ENCODE measurements at regions of chr22 and their contacts with region 1.

Region 1: GRCh38 chr22:39526736-39527171 is 5.8 kb downstream of the RPS19BP1 start:
- DNase-seq: no peak
- H3K4me3 ChIP-seq: no peak overlapping the region
- H3K27ac ChIP-seq: peak overlapping the region; percentile 25
- H3K4me1 ChIP-seq: peaks cover 46% of the 10 kb centered on the region
- H3K27me3 ChIP-seq: no peaks in the 10 kb centered on the region
- CTCF ChIP-seq: no peak

Region 2: GRCh38 chr22:38554281-38554680 is 972.5 kb before region 1 on chr22:
- CTCF ChIA-PET with region 1: no interaction called
- POLR2A ChIA-PET with region 1: interaction called, 17 read pairs
- intact Hi-C with region 1: no loop called
- DNase-seq: no peak
- H3K4me3 ChIP-seq: no peak overlapping the region
- H3K27ac ChIP-seq: no peak overlapping the region
- H3K4me1 ChIP-seq: no peaks in the 10 kb centered on the region
- H3K27me3 ChIP-seq: no peaks in the 10 kb centered on the region
- CTCF ChIP-seq: no peak

Region 3: GRCh38 chr22:38782402-38783094 is 744.2 kb before region 1 on chr22:
- CTCF ChIA-PET with region 1: no interaction called
- POLR2A ChIA-PET with region 1: interaction called, 18 read pairs
- intact Hi-C with region 1: no loop called
- DNase-seq: peak; percentile 90
- H3K4me3 ChIP-seq: peak overlapping the region; percentile 33
- H3K27ac ChIP-seq: peak overlapping the region; percentile 92
- H3K4me1 ChIP-seq: peaks cover 44% of the 10 kb centered on the region
- H3K27me3 ChIP-seq: no peaks in the 10 kb centered on the region
- CTCF ChIP-seq: no peak

Region 4: GRCh38 chr22:39388261-39389011 is 138.3 kb before region 1 on chr22:
- CTCF ChIA-PET with region 1: no interaction called
- POLR2A ChIA-PET with region 1: interaction called, 13 read pairs
- intact Hi-C with region 1: loop called (anchors 10 kb)
- DNase-seq: peak; percentile 67
- H3K4me3 ChIP-seq: peak overlapping the region; percentile 20
- H3K27ac ChIP-seq: no peak overlapping the region
- H3K4me1 ChIP-seq: no peaks in the 10 kb centered on the region
- H3K27me3 ChIP-seq: no peaks in the 10 kb centered on the region
- CTCF ChIP-seq: no peak

Region 5: DNA sequence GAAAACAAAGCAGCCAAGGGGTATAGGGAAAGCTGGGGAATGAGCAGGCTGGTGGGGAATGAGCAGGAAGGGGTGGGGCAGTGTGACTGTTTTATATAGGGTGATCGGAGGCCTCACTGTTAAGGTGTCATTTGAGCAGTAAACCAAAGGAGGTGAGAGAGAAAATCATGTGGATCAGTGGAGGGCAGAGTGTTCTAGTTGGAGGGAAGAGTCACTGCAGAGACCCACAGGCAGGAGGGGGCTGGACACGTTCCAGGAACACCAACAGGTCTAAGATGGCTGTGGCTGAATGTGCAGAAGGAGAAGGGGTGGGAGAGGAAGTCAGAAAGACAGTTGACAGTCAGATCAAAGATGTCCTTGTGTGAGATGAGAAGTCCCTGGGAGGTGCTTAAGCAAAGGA is 263.0 kb after region 1 on chr22:
- CTCF ChIA-PET with region 1: no interaction called
- POLR2A ChIA-PET with region 1: no interaction called
- intact Hi-C with region 1: no loop called
- DNase-seq: no peak
- H3K4me3 ChIP-seq: no peak overlapping the region
- H3K27ac ChIP-seq: no peak overlapping the region
- H3K4me1 ChIP-seq: no peaks in the 10 kb centered on the region
- H3K27me3 ChIP-seq: peaks cover 8% of the 10 kb centered on the region
- CTCF ChIP-seq: no peak

Measured in A673 (cell line).